ENCODE measurements at regions of chr22 and their contacts with region 1.

Region 1: DNA sequence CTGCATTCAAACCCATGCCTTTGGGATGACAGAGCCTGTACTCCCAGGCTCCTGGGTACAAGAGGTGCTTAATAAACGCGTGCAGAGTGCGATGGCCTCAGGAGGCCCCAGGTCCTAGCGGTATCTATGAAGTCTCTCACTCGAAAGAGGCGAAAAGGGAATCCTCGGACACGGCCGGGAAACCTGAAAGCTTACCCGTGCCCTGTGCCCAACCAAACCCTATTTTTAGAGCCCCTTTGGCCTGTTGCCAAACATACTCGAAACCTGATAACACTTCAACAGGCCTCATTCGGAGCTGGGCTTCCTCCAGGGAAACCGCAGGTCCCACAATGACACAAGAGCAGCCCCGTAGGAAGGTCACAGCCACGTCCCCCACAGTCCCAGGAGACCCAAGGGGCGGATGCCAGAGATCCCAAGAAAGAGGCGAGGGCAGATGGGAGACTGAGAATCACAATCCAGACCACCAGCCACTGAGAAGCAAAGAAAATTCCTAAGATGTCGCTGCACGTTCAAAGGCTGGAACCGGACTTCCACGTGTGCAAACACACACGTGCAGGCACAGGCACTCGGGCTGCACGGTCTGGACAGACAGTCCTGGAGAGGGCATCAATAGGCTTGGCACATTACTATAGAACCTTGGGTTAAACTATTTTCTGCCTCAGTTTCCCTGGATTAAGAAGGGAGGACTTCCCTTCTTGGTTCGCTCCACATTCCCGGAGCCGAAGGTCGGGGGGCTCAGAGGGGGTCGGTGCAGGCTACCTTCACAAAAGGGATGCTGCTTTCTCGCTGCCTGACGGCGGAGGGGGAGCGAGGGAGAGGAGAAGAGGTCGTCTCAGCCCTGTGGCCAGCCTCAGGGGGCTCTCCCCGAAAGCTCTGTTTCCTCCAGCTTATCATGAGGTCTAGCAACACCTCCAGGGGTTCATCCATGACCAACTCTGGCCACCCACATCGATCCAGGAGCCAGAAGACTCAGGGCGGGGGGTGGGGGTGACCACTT is 8.2 kb downstream of the PDGFB start:
- DNase-seq: peak; percentile 62 to 83 (median 75)
- ATAC-seq: peak; percentile 24 to 38
- H3K4me3 ChIP-seq: no peak overlapping the region
- H3K27ac ChIP-seq: peak overlapping the region; percentile 97
- H3K4me1 ChIP-seq: peaks cover 25% of the 10 kb centered on the region
- H3K27me3 ChIP-seq: no peaks in the 10 kb centered on the region

Region 2: GRCh38 chr22:39170825-39171622 is 65.6 kb before region 1 on chr22:
- intact Hi-C with region 1: loop called (anchors 5 to 10 kb)
- DNase-seq: peak; percentile 85 to 94 (median 93)
- ATAC-seq: peak; percentile 82 to 84
- H3K4me3 ChIP-seq: no peak overlapping the region
- H3K27ac ChIP-seq: no peak overlapping the region
- H3K4me1 ChIP-seq: peaks cover 27% of the 10 kb centered on the region
- H3K27me3 ChIP-seq: no peaks in the 10 kb centered on the region

Region 3: DNA sequence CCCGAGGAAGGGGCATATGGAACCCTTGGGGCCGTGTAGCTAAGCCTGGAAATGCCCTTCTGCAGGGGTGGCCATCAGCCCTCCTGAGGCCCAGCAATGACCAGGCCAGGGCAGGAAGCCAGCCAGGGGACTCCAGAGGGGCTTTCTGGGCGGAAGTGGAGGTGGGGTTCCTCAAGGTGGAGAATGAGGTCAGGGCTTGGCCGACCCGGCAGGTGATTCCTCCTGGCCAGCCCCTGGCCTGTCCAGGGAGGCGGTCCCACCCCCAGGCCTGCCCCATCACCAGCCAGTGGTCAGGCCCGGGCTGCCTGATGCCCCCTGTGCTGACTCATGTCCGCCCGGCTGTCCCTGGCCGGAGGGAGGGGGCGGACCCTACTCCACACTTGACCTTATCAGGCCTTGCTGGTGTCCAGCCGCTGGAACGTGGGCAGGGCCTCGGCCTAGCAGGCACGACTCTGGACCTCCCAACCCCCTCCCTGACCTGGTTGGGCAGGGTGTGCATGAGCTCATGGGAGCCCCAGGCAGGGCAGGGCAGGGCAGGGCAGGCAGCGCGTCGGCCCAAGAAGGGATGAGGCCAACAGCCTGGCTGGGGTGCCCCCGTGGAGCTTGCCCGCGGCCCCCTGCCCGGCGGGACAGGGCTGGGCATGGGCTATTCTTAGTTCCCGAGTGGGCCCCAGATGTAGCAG is 46.8 kb after region 1 on chr22:
- intact Hi-C with region 1: loop called in 1 of 4 experiments (anchors 5 kb)
- DNase-seq: peak; percentile 83 to 89 (median 86)
- ATAC-seq: peak; percentile 87 to 92
- H3K4me3 ChIP-seq: no peak overlapping the region
- H3K27ac ChIP-seq: peak overlapping the region; percentile 63
- H3K4me1 ChIP-seq: peaks cover 14% of the 10 kb centered on the region
- H3K27me3 ChIP-seq: no peaks in the 10 kb centered on the region

Region 4: GRCh38 chr22:39306581-39307361 is 70.2 kb after region 1 on chr22:
- intact Hi-C with region 1: loop called in 3 of 4 experiments (anchors 5 to 10 kb)
- DNase-seq: peak in 2 of 3 donors; percentile 75 to 79
- ATAC-seq: no peak
- H3K4me3 ChIP-seq: no peak overlapping the region
- H3K27ac ChIP-seq: no peak overlapping the region
- H3K4me1 ChIP-seq: peaks cover 5% of the 10 kb centered on the region
- H3K27me3 ChIP-seq: no peaks in the 10 kb centered on the region

Region 5: DNA sequence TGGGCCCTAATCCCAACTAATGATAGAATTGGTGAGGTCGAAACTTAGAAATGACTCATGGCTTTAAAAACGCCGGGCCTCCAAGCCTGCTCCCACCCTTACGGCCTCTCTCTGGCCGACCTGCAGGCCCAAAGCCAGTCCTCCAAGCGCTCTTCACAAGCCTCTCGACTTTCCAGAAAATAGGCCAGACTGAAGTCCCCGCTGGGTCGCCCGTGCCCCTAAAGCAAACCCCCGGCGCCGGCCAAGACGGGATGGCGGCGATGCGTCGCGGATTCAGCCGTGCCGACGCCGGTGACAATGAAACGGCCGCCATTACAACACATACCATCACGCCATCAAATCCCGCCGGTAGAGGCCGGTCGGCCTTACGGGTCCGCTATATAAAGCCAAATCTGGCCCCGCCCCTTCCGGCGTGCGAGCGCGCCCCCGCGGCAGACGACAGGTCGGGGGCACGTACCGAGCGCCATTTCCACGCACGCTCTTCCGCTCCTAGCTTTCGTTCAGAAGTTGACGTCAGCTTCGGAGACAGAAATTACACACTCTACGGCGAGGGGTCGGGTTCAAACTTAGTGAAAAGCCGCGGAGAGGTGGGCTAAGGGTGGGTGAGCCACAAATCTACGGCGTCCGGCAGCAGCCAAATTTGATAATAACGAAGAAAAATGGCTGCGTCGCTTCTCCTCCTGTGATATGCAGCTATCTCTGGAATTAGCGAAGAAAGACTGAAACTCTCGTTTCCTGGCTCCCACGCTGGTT is 82.8 kb after region 1 on chr22 and contains the start of gene RPL3:
- intact Hi-C with region 1: loop called in 3 of 4 experiments (anchors 5 to 10 kb)
- DNase-seq: peak; percentile 96 to 99 (median 99)
- ATAC-seq: peak; percentile 91 to 92
- H3K4me3 ChIP-seq: peak within 1 kb of the TSS; percentile 79
- H3K27ac ChIP-seq: peak within 1 kb of the TSS; percentile 99
- H3K4me1 ChIP-seq: peaks cover 11% of the 10 kb centered on the region
- H3K27me3 ChIP-seq: no peaks in the 10 kb centered on the region
- total RNA-seq, gene RPL3: 948 to 1,416 (median 984) TPM